ENCODE measurements at regions of chr5 and their contacts with region 1.

Region 1: DNA sequence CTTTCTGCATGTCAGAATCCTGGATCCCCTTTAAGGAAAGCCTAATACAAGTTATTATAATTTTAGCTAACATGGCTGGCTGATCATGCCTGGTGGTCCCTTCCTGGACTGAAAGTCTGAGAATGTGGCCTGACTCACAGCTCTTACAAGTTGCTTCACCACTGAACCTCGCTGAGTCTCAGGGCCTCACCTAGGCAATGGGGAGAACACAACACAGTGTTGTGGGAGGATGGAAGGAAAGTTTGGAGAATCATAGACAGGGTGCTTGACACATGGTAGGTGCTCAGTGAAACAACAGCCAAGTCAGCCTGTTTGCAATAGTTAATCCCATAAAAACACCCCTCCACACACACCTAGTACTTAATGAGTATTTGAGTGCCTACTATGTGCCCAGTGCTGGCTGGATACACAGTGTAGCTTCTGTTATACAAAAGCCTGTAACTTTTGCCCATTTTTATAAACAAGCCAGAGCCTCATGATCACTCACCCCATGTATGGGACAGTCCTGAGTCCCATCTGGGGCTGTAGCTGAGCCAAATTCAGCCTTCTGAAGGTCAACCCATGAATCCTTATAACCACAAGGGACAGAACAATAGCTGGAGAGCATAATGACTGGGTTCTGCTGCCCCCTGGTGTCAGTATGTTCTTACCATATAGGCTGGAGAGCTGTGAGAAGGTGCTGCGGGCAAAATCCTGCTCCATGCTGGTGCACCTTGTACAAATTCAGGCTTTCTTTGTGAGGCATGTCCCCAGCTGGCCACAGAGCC is 3.9 kb downstream of the ACSL6 start:
- DNase-seq: peak; percentile 61
- ATAC-seq: peak; percentile 86
- H3K4me3 ChIP-seq: no peak overlapping the region
- H3K27ac ChIP-seq: no peak overlapping the region
- H3K4me1 ChIP-seq: no peaks in the 10 kb centered on the region; the same call in 1 of the 2 replicates
- H3K27me3 ChIP-seq: peaks cover 7% of the 10 kb centered on the region
- CTCF ChIP-seq: peak; percentile 82; the same call in 1 of the 2 replicates

Region 2: GRCh38 chr5:131589510-131590348 is 417.9 kb before region 1 on chr5:
- CTCF ChIA-PET with region 1: interaction called, 8 read pairs
- POLR2A ChIA-PET with region 1: no interaction called
- in situ Hi-C with region 1: no loop called
- intact Hi-C with region 1: loop called (anchors 5 kb)
- DNase-seq: no peak
- ATAC-seq: peak; percentile 87
- H3K4me3 ChIP-seq: no peak overlapping the region
- H3K27ac ChIP-seq: no peak overlapping the region
- H3K4me1 ChIP-seq: no peaks in the 10 kb centered on the region
- H3K27me3 ChIP-seq: no peaks in the 10 kb centered on the region
- CTCF ChIP-seq: peak; percentile 93

Region 3: GRCh38 chr5:131810510-131811249 is 196.9 kb before region 1 on chr5:
- CTCF ChIA-PET with region 1: interaction called, 6 read pairs
- POLR2A ChIA-PET with region 1: no interaction called
- in situ Hi-C with region 1: no loop called
- intact Hi-C with region 1: loop called (anchors 2 kb)
- DNase-seq: no peak
- ATAC-seq: no peak
- H3K4me3 ChIP-seq: no peak overlapping the region
- H3K27ac ChIP-seq: no peak overlapping the region
- H3K4me1 ChIP-seq: no peaks in the 10 kb centered on the region; the same call in 1 of the 2 replicates
- H3K27me3 ChIP-seq: no peaks in the 10 kb centered on the region
- CTCF ChIP-seq: peak; percentile 48; the same call in 1 of the 2 replicates

Measured in Panc1 (cell line).